ENCODE measurements at regions of chr18 and their contacts with region 1.

Region 1: DNA sequence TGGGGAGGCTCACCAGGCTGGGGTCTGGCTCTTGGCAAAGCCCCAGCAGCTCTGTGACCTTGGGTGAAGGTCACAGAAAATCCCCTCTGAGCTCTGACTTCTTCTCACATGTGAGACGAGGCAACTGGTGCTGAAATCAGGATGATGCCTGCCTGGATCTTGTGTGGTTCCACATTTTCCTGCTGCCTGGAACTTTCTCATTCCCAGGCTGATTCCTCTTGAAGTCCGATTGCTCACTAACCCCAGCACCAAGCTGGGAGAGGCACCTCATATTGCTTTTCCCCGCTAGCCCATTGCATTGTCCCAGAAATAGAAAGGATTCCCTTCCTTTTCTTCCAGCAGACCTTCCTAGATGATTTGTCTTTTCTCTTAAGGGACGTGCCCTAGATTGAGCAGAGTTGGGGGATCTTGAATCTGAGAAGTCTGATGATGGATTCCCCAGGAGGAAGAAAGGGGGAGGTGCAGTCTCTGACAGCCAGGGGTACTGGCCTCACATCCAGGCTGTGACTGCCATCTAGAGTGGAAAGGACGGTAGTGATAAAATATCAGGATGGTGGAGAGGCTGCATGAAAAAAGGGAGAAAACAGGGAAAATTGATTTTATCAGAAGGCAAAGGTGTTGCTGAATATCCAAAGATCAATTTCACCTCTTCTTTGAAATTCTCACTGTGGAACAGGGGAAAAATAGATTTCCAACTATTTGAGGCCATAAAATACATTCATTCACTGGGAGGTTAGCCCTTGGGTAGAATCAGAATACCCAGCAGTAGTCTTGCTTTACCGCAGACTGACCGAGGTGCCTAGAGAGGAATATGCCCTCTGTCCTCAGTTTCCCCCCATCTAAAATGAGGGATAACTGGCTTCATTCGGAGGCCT is 96.3 kb downstream of the FAM210A start:
- DNase-seq: peak in 1 of 2 donors; percentile 80
- ATAC-seq: peak; percentile 78 to 93 (median 90)
- H3K4me3 ChIP-seq: no peak overlapping the region
- H3K27ac ChIP-seq: peak overlapping the region in 7 of 10 donors; percentile 34 to 61 (median 43)
- H3K4me1 ChIP-seq: peaks cover 6 to 32% (median 22%) of the 10 kb centered on the region in 9 donors
- H3K27me3 ChIP-seq: no peaks in the 10 kb centered on the region
- CTCF ChIP-seq: peak; percentile 69 to 91 (median 83)

Region 2: DNA sequence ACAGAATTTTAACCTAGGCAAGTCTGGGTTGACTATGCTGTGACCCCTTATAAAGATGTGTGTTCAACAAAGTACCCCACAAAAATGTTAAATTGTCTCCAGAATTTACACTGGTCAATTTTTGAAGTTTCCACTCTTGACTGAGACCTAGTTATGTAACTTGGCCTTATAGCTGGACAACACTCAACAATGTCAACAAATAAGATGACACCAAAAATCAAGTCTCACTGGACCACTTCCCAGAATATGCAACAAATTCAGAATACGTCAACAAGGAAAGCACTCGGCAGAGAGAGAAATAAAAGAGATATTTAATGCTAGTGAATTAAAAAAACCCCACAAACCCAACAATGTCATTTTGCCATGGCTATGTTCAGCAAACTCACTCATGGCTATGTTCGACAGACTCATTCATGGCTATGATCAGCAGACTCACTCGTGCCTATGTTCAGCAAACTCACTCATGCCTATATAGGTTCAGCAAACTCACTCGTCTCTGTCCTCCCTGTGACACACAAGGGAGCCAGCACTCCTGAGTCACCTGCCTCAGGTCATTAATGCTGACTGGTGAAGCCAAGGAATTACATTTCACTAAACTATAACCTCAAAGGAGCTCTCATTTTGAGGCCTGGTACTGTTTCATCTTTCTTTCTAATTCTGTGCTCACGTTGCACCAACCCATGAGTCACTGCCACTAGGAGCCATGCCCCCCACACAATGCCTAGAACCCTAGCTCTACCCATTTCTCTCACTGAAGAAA is 818.7 kb before region 1 on chr18:
- intact Hi-C with region 1: no loop called
- DNase-seq: no peak
- ATAC-seq: no peak
- H3K4me3 ChIP-seq: no peak overlapping the region
- H3K27ac ChIP-seq: no peak overlapping the region
- H3K4me1 ChIP-seq: no peaks in the 10 kb centered on the region
- H3K27me3 ChIP-seq: no peaks in the 10 kb centered on the region
- CTCF ChIP-seq: no peak

Region 3: DNA sequence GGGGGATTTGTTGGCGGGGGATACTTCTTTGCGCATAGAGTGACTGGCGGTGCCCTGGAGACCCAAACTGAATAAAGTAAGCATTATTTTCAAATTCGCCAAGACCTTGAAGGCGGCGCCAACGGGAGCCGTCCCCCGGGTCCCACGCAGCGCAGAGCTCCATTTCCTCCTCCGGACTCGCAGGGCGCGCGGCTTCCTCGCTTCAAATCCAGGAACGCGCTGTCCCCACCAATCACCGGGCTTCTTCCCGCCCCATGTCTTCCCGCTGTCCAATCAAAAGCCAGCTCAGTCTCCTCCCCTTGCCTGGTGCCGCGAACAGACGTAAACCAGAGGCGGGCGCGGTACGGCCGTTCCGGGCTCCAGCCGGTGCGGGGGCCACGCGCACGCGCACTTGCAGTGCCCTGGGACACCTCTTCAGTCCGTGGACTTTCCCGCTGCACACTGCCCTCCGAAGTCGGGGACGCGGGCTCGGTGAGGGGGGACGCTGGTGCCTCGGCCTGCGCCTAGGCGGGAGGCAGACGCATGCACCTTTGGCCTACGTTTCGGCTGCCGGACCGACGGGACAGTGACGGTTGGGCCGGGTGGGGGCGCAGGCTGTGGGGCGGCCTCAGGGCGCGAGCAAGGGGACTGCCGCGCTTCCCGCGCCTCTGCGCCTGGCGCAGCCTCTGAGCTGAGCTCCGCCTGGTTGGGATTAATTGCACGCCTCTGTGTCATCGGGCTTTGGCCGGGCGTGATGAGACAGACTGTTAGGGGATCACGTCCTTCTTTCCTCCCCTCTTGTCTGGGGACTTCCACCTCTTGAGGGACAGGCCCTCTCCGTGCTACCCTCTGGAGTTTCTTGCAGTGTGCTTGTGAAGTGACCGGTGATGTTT is 638.9 kb before region 1 on chr18 and contains the start of gene CEP192:
- intact Hi-C with region 1: loop called in 1 of 10 experiments (anchors 10 kb)
- DNase-seq: peak; percentile 97 to 98
- ATAC-seq: peak; percentile 98 to 100 (median 99)
- H3K4me3 ChIP-seq: peak within 1 kb of the TSS; percentile 49 to 93 (median 78)
- H3K27ac ChIP-seq: peak within 1 kb of the TSS; percentile 54 to 92 (median 87)
- H3K4me1 ChIP-seq: peaks cover 6 to 35% (median 24%) of the 10 kb centered on the region in 9 donors
- H3K27me3 ChIP-seq: no peaks in the 10 kb centered on the region
- CTCF ChIP-seq: peak in 3 of 9 donors; percentile 9 to 13 (median 13)
- total RNA-seq, gene CEP192: 18.3 to 35.6 (median 32.4) TPM

Region 4: GRCh38 chr18:13112982-13113381 is 517.1 kb before region 1 on chr18:
- intact Hi-C with region 1: loop called in 1 of 10 experiments (anchors 10 kb)
- DNase-seq: peak; percentile 77 to 80
- ATAC-seq: peak; percentile 93 to 100 (median 97)
- H3K4me3 ChIP-seq: no peak overlapping the region
- H3K27ac ChIP-seq: peak overlapping the region in 7 of 10 donors; percentile 11 to 66 (median 40)
- H3K4me1 ChIP-seq: peaks cover 0 to 13% (median 3%) of the 10 kb centered on the region in 9 donors
- H3K27me3 ChIP-seq: no peaks in the 10 kb centered on the region
- CTCF ChIP-seq: peak; percentile 30 to 73 (median 51)

Region 5: DNA sequence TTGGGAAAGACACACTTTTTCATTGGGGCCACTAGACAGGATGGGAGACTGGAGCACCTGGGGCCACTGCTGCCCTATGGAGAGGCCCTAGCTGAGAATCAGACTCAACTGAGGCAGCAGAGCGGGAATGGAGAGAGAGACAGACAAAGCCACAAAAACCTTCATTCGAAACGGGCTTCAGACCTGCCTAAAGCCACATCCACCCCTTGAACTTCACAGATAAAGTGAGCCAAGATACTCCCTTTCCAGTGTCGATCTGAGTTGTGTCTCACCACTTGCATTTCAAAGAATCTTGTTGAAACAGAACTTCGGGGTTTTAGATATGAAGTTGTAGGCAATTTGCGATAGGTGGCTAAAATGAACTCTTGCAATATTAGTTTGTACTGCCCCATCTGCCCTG is 422.8 kb before region 1 on chr18:
- intact Hi-C with region 1: loop called in 2 of 10 experiments (anchors 10 kb)
- DNase-seq: no peak
- ATAC-seq: no peak
- H3K4me3 ChIP-seq: no peak overlapping the region
- H3K27ac ChIP-seq: no peak overlapping the region
- H3K4me1 ChIP-seq: peaks cover 0 to 4% (median 0%) of the 10 kb centered on the region in 9 donors
- H3K27me3 ChIP-seq: no peaks in the 10 kb centered on the region
- CTCF ChIP-seq: no peak

Region 6: DNA sequence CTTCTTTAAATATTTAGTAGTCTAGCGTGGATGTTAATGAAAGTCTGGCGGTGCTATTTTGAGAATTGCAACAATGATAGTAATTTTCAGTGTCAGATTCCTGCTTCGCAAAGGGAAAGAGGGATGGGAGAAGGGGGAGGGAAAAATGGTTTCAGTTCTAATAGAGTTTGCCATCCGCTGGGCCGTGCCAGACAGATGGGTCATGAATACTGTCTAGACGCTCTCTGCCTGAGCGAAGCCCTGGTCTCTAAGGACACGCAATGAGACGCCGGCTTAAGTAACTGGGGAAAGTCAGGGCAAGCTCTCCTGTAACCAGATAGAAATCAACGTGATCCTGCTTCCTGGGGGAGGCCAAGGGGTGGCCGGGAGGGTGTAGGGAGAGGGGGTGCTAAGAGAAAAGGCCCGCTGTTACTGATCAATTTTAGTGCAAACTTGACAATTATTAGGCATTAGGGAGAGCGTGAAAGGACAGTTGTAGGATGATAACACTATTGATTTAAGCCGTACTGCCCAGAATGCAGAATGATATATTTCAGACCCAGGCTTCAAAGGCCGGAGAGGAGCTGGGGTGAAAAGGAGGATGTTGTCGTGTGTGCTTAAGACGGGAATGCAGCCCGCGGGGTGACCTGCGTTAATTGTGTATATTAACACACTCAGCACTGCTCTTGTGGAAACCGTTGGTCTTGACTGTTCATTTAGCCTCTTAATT is 182.3 kb before region 1 on chr18:
- intact Hi-C with region 1: loop called in 1 of 10 experiments (anchors 10 kb)
- DNase-seq: peak in 1 of 2 donors; percentile 34
- ATAC-seq: peak in 4 of 8 donors; percentile 15 to 57 (median 40)
- H3K4me3 ChIP-seq: no peak overlapping the region
- H3K27ac ChIP-seq: peak overlapping the region in 2 of 10 donors; percentile 23 to 46
- H3K4me1 ChIP-seq: peaks cover 14 to 75% (median 32%) of the 10 kb centered on the region in 9 donors
- H3K27me3 ChIP-seq: no peaks in the 10 kb centered on the region
- CTCF ChIP-seq: no peak

Region 7: GRCh38 chr18:13558124-13558523 is 72.0 kb before region 1 on chr18:
- intact Hi-C with region 1: loop called in 9 of 10 experiments (anchors 2 to 10 kb)
- DNase-seq: peak; percentile 41 to 55
- ATAC-seq: peak; percentile 58 to 86 (median 78)
- H3K4me3 ChIP-seq: no peak overlapping the region
- H3K27ac ChIP-seq: peak overlapping the region in 4 of 10 donors; percentile 3 to 36 (median 30)
- H3K4me1 ChIP-seq: peaks cover 2 to 71% (median 30%) of the 10 kb centered on the region in 9 donors
- H3K27me3 ChIP-seq: no peaks in the 10 kb centered on the region
- CTCF ChIP-seq: peak in 8 of 9 donors; percentile 21 to 74 (median 65)